T-cell (primary cell): ENCODE measurements at regions of chr14 and their contacts with region 1.

Region 1: DNA sequence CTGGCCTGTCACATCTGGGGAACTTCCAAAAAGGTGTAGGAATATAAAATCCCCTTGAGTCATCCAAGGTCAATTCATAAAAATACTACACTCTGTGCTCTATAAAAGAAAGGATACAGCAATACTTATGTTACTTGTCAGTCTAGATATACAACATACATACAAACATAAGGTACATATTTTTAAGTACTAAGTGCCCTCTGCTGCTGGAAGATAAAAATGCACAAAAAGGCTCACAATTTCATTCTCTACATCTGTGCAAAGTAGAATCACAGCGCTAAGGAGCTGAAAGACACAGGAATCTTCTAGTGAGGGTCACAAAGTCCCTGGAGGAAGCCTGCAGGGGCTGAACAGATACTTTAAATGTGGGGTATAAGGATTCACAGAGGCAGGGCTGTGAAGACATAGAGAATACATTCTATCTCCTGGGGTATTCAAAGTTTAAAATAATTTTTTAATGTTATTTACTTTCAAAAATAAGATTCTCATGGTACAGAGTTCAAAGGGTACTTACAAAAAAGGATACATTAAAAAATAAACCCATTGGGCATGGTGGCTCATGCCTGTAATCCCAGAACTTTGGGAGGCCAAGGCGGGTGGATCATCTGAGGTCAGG is 10.2 kb upstream of the GOLGA5 start:
- DNase-seq: peak in 16 of 35 experiments; percentile 5 to 65 (median 16)
- ATAC-seq: peak; percentile 63 to 82 (median 76)
- H3K4me3 ChIP-seq: no peak overlapping the region
- H3K4me3 Mint-ChIP-seq: no peak overlapping the region
- H3K27ac ChIP-seq: no peak overlapping the region
- H3K27ac Mint-ChIP-seq: no peak overlapping the region
- H3K4me1 ChIP-seq: peaks cover 0 to 4% of the 10 kb centered on the region in 2 experiments
- H3K4me1 Mint-ChIP-seq: peaks cover 0 to 11% (median 0%) of the 10 kb centered on the region in 3 donors
- H3K27me3 ChIP-seq: no peaks in the 10 kb centered on the region
- H3K27me3 Mint-ChIP-seq: no peaks in the 10 kb centered on the region

Region 2: DNA sequence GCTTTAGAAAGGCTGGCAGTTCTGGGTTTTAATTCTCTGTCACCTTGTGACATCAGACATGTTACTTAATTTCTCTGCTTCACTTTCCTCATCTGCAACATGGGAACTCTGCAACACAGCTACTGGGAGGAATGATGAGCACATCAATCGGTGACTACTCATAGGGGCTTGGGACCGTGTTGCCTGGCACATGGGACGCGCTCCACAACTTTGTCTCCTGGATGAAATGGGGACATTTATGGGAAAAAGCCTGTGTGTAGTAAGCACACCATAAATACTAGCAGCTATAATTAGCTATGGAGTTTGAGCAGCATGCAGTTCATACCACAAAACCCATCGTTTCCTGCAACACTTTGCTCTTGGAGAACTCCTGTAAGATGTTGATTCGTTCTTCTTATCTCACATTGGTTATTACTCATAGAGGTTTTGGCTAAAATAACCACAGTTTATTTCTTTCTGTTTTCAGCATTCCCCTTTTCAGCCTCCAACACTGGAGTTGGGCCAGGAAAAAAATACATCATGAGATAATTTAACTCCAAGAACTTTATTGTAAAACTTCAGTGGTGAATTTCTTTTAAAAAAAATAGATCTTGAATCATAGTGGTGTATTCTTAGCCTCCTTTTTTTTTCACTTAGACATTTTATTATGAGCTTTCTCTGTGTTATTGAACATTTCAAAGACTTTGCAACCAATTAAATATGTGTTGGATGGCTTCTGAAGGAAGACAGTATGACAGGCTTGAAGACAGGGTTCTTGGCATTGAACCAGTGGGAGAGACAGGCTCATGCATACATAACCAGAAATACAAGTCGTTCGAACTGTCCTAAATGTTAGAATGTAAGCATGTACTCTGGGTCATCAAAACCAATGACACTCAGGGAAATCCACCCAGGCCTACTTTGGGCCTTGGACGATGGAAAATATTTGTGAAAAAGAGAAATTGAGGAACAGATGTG is 197.7 kb before region 1 on chr14:
- CTCF ChIA-PET with region 1: interaction called in 1 of 2 experiments, 12 read pairs
- POLR2A ChIA-PET with region 1: no interaction called
- DNase-seq: peak in 17 of 35 experiments; percentile 17 to 80 (median 41)
- ATAC-seq: peak; percentile 84 to 91 (median 88)
- H3K4me3 ChIP-seq: peak overlapping the region; percentile 2 to 23
- H3K4me3 Mint-ChIP-seq: peak overlapping the region; percentile 62 to 72 (median 69)
- H3K27ac ChIP-seq: peak overlapping the region; percentile 92
- H3K27ac Mint-ChIP-seq: peak overlapping the region; percentile 95 to 96
- H3K4me1 ChIP-seq: peaks cover 80 to 95% of the 10 kb centered on the region in 2 experiments
- H3K4me1 Mint-ChIP-seq: peaks cover 93 to 97% (median 96%) of the 10 kb centered on the region in 3 donors
- H3K27me3 ChIP-seq: no peaks in the 10 kb centered on the region
- H3K27me3 Mint-ChIP-seq: no peaks in the 10 kb centered on the region

Region 3: GRCh38 chr14:92659765-92660561 is 124.0 kb before region 1 on chr14:
- CTCF ChIA-PET with region 1: no interaction called
- POLR2A ChIA-PET with region 1: no interaction called
- DNase-seq: no peak
- ATAC-seq: peak in 1 of 4 experiments; percentile 8
- H3K4me3 ChIP-seq: no peak overlapping the region
- H3K4me3 Mint-ChIP-seq: peak overlapping the region in 1 of 3 donors; percentile 99
- H3K27ac ChIP-seq: peak overlapping the region; percentile 35
- H3K27ac Mint-ChIP-seq: peak overlapping the region; percentile 89 to 93
- H3K4me1 ChIP-seq: peaks cover 23 to 81% of the 10 kb centered on the region in 2 experiments
- H3K4me1 Mint-ChIP-seq: peaks cover 87 to 93% (median 91%) of the 10 kb centered on the region in 3 donors
- H3K27me3 ChIP-seq: no peaks in the 10 kb centered on the region
- H3K27me3 Mint-ChIP-seq: no peaks in the 10 kb centered on the region

Region 4: GRCh38 chr14:92728759-92729370 is 55.1 kb before region 1 on chr14:
- CTCF ChIA-PET with region 1: no interaction called
- POLR2A ChIA-PET with region 1: no interaction called
- DNase-seq: no peak
- ATAC-seq: peak in 1 of 4 experiments; percentile 63
- H3K4me3 ChIP-seq: no peak overlapping the region
- H3K4me3 Mint-ChIP-seq: no peak overlapping the region
- H3K27ac ChIP-seq: no peak overlapping the region
- H3K27ac Mint-ChIP-seq: no peak overlapping the region
- H3K4me1 ChIP-seq: peaks cover 0 to 8% of the 10 kb centered on the region in 2 experiments
- H3K4me1 Mint-ChIP-seq: peaks cover 3 to 12% (median 4%) of the 10 kb centered on the region in 3 donors
- H3K27me3 ChIP-seq: peaks cover 0 to 8% of the 10 kb centered on the region in 2 experiments
- H3K27me3 Mint-ChIP-seq: no peaks in the 10 kb centered on the region

Region 5: GRCh38 chr14:92832137-92832700 is 48.3 kb after region 1 on chr14:
- CTCF ChIA-PET with region 1: no interaction called
- POLR2A ChIA-PET with region 1: no interaction called
- DNase-seq: no peak
- ATAC-seq: no peak
- H3K4me3 ChIP-seq: no peak overlapping the region
- H3K4me3 Mint-ChIP-seq: no peak overlapping the region
- H3K27ac ChIP-seq: no peak overlapping the region
- H3K27ac Mint-ChIP-seq: peak overlapping the region in 1 of 2 donors; percentile 29
- H3K4me1 ChIP-seq: no peaks in the 10 kb centered on the region
- H3K4me1 Mint-ChIP-seq: no peaks in the 10 kb centered on the region
- H3K27me3 ChIP-seq: no peaks in the 10 kb centered on the region
- H3K27me3 Mint-ChIP-seq: no peaks in the 10 kb centered on the region

Region 6: DNA sequence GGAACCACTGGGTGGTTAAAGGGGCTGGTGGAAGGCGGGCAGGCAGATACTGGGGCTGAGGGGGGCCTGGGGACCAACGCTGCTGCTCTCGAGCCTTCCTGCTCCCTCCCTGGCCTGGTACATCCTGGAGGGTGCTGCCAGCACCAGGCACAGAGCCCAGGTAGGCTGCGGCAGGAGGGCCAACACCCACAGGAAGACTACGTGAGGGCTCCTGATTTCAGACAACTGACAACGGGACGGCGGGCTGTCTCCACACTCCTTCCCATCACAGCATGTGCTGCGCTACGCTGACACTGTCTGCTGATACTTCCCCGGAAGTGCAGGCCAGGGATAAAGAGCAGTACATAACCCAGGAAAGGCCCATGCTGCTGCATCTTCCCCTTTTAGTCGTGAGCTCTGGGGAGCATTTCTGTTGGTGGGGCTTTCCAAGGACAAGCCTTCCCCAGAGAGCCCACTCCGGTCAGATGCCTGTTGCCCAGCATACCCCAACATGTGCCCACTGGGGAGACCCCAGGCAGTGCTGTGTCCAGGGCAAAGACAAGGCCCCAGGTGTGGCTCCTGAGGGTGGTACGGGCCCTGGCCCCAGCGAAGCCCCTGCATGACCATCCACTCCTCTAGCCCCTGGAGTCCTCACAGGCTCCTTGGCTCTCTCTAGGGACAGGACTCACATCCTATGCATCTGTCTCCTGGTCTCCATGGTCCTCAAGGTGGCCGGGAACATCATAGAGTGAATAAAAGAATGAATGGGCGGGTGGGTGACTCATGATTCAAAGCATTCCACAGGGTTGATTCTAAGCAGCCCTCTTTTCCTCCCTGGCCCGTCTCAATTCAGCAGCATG is 177.0 kb after region 1 on chr14:
- CTCF ChIA-PET with region 1: no interaction called
- POLR2A ChIA-PET with region 1: no interaction called
- DNase-seq: no peak
- ATAC-seq: no peak
- H3K4me3 ChIP-seq: no peak overlapping the region
- H3K4me3 Mint-ChIP-seq: no peak overlapping the region
- H3K27ac ChIP-seq: no peak overlapping the region
- H3K27ac Mint-ChIP-seq: no peak overlapping the region
- H3K4me1 ChIP-seq: no peaks in the 10 kb centered on the region
- H3K4me1 Mint-ChIP-seq: peaks cover 0 to 3% (median 0%) of the 10 kb centered on the region in 3 donors
- H3K27me3 ChIP-seq: no peaks in the 10 kb centered on the region
- H3K27me3 Mint-ChIP-seq: no peaks in the 10 kb centered on the region